PC-9 (cell line): ENCODE measurements at regions of chr6 and their contacts with region 1.

Region 1: GRCh38 chr6:16761471-16762267 is 409 bp upstream of the ATXN1 start:
- DNase-seq: peak; percentile 72 to 90
- H3K4me3 ChIP-seq: peak overlapping the region; percentile 84
- H3K27ac ChIP-seq: peak overlapping the region; percentile 97
- H3K4me1 ChIP-seq: peaks cover 61% of the 10 kb centered on the region
- H3K27me3 ChIP-seq: no peaks in the 10 kb centered on the region
- CTCF ChIP-seq: no peak; the same call in 1 of the 2 replicates

Region 2: DNA sequence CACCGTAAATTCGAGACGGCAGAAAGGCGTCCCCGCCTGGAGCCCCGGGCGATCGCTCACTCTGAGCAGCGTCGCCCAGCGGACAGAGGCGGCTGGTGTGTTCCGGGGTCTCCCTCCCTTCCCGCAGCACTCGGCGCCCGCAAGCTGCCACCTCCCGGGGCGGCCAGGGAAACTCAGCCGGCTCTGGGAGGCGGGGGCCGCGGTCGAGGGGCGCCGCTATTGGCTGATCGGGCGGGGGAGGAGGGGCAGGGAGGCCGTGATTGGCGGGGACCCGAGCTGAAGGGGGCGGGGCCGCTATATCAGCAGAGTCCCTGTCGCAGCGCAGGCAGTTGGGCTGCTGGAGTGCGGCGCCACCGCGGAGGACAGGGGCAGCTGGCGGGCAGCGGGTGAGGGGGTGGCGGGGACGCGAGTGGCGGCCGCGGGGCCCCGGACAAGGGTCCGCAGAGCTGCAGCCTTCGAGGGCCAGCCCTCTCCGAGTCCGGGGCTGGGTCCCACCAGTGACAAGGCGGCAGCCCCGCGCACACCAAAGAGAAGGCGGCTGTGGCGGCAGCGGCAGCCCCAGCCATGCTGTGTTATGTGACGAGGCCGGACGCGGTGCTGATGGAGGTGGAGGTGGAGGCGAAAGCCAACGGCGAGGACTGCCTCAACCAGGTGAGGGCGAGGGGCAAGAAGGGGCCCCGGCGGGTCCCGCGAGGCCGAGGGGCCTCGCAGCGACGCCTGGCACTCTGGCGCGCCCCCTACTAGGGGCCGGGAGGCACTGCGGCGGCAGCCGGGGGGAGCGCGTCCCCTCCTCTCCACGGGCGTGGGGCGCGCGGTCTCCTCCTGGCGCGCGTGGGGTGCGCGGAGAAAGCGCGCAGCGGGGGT is 632.7 kb before region 1 on chr6 and contains the start of gene MYLIP:
- CTCF ChIA-PET with region 1: no interaction called
- POLR2A ChIA-PET with region 1: no interaction called
- intact Hi-C with region 1: loop called (anchors 5 kb)
- DNase-seq: peak; percentile 84 to 97
- H3K4me3 ChIP-seq: peak within 1 kb of the TSS; percentile 91
- H3K27ac ChIP-seq: peak within 1 kb of the TSS; percentile 87
- H3K4me1 ChIP-seq: peaks cover 28% of the 10 kb centered on the region
- H3K27me3 ChIP-seq: peaks cover 6% of the 10 kb centered on the region; the same call in 1 of the 2 replicates
- CTCF ChIP-seq: peak; percentile 68
- total RNA-seq, gene MYLIP: 29.2 and 42.2 TPM in 2 replicates

Region 3: DNA sequence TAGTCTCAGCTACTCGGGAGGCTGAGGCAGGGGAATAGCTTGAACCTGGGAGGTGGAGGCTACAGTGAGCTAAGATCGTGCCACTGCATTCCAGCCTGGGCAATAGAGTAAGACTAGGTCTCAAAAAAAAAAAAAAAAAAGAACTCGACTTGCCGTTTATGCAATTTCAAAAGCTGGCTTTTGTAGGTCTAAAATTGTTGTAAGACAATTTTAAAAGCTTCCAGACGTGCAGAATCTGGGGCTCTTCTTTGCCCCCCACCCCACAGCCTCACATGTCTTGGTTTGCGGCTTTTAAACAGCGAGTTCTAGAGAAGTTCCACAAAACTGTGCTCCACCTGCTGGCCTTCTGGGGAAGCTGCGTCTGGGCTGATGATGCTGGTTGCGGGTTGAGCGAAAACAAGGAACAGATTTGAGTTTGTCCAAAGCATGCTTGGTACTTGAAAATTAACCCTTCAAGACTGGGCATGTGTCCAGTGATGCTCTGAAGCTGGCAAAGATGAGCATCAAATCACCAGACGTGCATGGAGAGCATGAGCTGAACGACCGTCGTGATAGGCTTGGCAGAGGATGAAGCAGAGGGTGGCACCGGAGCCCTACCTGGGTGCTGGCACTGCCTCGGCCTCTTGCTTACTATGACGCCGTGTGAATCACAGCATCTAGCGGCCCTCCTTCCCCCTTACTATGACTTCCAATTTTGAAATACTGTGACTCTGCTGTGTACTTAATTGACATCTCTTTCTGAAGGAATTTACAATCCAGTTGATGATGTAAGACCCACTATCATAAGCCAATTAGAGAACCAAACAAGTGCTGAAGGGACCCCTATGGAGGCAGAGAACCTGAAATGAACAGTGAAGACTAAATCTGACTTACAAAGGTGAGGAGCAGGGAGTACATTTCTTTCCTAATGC is 351.9 kb before region 1 on chr6:
- CTCF ChIA-PET with region 1: no interaction called
- POLR2A ChIA-PET with region 1: no interaction called
- intact Hi-C with region 1: loop called (anchors 5 kb)
- DNase-seq: no peak
- H3K4me3 ChIP-seq: no peak overlapping the region
- H3K27ac ChIP-seq: no peak overlapping the region
- H3K4me1 ChIP-seq: no peaks in the 10 kb centered on the region
- H3K27me3 ChIP-seq: no peaks in the 10 kb centered on the region
- CTCF ChIP-seq: peak; percentile 66

Region 4: GRCh38 chr6:16514249-16514648 is 247.4 kb before region 1 on chr6:
- CTCF ChIA-PET with region 1: interaction called, 13 read pairs
- POLR2A ChIA-PET with region 1: interaction called, 3 read pairs
- intact Hi-C with region 1: loop called (anchors 2 kb)
- DNase-seq: no peak
- H3K4me3 ChIP-seq: no peak overlapping the region
- H3K27ac ChIP-seq: no peak overlapping the region
- H3K4me1 ChIP-seq: no peaks in the 10 kb centered on the region
- H3K27me3 ChIP-seq: no peaks in the 10 kb centered on the region
- CTCF ChIP-seq: peak; percentile 53

Region 5: DNA sequence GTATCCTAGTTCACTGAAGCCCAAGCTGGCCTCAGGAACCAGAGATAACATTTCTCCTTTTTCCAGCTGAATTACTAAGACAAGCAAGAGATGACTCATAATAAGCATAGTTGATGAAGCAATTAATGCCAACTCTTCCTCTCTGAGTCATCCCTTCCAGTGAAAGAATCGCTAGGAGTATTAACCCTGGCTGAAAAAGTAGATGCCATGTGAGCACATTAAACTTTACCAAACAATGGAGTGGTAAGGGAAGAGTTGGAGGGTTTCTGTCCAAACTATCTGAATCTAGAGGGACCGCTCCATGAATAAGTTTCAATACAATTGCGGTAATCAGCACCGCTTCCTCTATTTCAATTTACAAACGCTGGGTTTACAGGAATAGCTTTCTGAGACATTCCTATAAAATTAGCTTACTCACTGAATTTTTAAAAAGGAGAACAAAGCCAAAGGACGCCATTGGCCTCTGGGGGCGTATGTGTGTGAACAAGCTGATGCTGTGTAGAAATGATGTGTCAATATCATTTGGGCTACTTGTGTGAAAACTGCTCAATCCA is 48.7 kb before region 1 on chr6:
- CTCF ChIA-PET with region 1: interaction called, 18 read pairs
- POLR2A ChIA-PET with region 1: no interaction called
- intact Hi-C with region 1: loop called (anchors 2 kb)
- DNase-seq: peak; percentile 45 to 95
- H3K4me3 ChIP-seq: peak overlapping the region; percentile 34; the same call in 1 of the 2 replicates
- H3K27ac ChIP-seq: peak overlapping the region; percentile 95
- H3K4me1 ChIP-seq: peaks cover 33% of the 10 kb centered on the region
- H3K27me3 ChIP-seq: no peaks in the 10 kb centered on the region
- CTCF ChIP-seq: peak; percentile 68

Region 6: GRCh38 chr6:17001188-17001587 is 239.5 kb after region 1 on chr6:
- CTCF ChIA-PET with region 1: interaction called, 7 read pairs
- POLR2A ChIA-PET with region 1: no interaction called
- intact Hi-C with region 1: loop called (anchors 1 kb)
- DNase-seq: no peak
- H3K4me3 ChIP-seq: no peak overlapping the region
- H3K27ac ChIP-seq: no peak overlapping the region
- H3K4me1 ChIP-seq: no peaks in the 10 kb centered on the region
- H3K27me3 ChIP-seq: no peaks in the 10 kb centered on the region
- CTCF ChIP-seq: peak; percentile 36; the same call in 1 of the 2 replicates

Region 7: GRCh38 chr6:17061097-17061496 is 299.4 kb after region 1 on chr6:
- CTCF ChIA-PET with region 1: no interaction called
- POLR2A ChIA-PET with region 1: no interaction called
- intact Hi-C with region 1: no loop called
- DNase-seq: no peak
- H3K4me3 ChIP-seq: no peak overlapping the region
- H3K27ac ChIP-seq: no peak overlapping the region
- H3K4me1 ChIP-seq: no peaks in the 10 kb centered on the region
- H3K27me3 ChIP-seq: no peaks in the 10 kb centered on the region
- CTCF ChIP-seq: no peak

Region 8: DNA sequence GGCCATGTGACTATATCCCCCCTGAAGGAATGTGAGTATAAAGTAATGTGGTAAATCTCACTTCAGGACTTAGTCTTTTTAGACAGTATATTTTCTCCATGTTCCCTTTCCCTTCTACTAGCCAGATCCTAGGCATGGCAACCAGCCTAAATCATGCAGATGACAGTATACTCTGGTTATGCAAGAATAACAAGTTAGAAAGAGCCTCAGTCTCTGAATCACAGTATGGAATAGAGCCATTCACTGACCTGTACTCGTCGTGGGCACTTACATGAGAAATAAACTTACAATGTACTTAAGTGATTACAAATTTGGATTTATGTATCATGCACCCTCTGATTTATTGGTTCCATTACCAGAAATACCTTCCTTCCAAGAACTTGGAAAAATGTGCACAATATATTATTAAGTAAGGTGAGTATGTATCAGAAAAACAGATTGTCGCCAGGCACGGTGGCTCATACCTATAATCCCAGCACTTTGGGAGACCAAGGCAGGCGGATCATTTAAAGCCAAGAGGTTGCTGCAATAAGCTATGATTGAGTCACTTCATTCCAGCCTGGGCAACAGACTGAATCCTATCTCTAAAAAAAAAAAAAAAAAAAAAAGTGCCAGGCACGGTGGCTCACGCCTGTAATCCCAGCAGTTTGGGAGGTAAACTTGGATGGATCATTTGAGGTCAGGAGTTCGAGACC is 813.3 kb after region 1 on chr6:
- CTCF ChIA-PET with region 1: interaction called, 13 read pairs
- POLR2A ChIA-PET with region 1: interaction called, 4 read pairs
- intact Hi-C with region 1: no loop called
- DNase-seq: no peak
- H3K4me3 ChIP-seq: no peak overlapping the region
- H3K27ac ChIP-seq: no peak overlapping the region
- H3K4me1 ChIP-seq: no peaks in the 10 kb centered on the region
- H3K27me3 ChIP-seq: no peaks in the 10 kb centered on the region
- CTCF ChIP-seq: no peak